HEK293 (cell line): ENCODE measurements at regions of chr5 and their contacts with region 1.

Region 1: GRCh38 chr5:159331093-159331973 is 1.0 kb upstream of the IL12B start:
- H3K4me3 ChIP-seq: peak overlapping the region; percentile 63
- H3K27ac ChIP-seq: peak overlapping the region; percentile 70
- H3K4me1 ChIP-seq: peaks cover 3% of the 10 kb centered on the region; the same call in 1 of the 2 replicates
- CTCF ChIP-seq: peak; percentile 86

Region 2: GRCh38 chr5:159341914-159342313 is 10.6 kb after region 1 on chr5:
- CTCF ChIA-PET with region 1: interaction called, 22 read pairs
- POLR2A ChIA-PET with region 1: interaction called, 8 read pairs
- H3K4me3 ChIP-seq: no peak overlapping the region
- H3K27ac ChIP-seq: peak overlapping the region; percentile 47; the same call in 1 of the 2 replicates
- H3K4me1 ChIP-seq: peaks cover 6% of the 10 kb centered on the region
- CTCF ChIP-seq: no peak